ENCODE measurements at regions of chr2 and their contacts with region 1.

Region 1: GRCh38 chr2:9050122-9050809 is 46.8 kb upstream of the MBOAT2 start:
- DNase-seq: no peak
- H3K4me3 ChIP-seq: no peak overlapping the region
- H3K27ac ChIP-seq: no peak overlapping the region
- H3K4me1 ChIP-seq: peaks cover 0 to 5% (median 0%) of the 10 kb centered on the region in 4 donors
- H3K27me3 ChIP-seq: no peaks in the 10 kb centered on the region
- CTCF ChIP-seq: no peak
- EP300 ChIP-seq: no peak
- POLR2A ChIP-seq: no peak

Region 2: DNA sequence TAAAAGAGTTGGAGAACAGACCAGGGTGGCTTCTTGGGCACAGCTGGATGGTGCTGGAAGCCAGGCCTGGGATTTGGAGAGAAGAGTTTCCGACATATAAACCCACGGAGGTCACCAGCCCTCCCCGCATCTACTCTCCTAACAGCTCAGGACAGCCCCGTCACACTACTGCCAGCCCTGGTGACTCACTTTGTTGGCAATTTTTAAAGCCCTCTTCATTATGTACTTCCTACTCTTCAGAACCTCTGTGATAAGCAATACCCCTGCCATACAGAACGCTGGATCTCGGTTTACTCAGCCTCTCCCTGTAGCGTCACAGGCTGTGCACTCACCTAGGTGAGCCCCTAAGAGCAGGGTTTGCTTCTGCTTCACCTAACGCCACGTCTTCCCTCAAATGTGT is 320.3 kb before region 1 on chr2:
- in situ Hi-C with region 1: no loop called
- intact Hi-C with region 1: no loop called
- DNase-seq: no peak
- H3K4me3 ChIP-seq: no peak overlapping the region
- H3K27ac ChIP-seq: no peak overlapping the region
- H3K4me1 ChIP-seq: no peaks in the 10 kb centered on the region
- H3K27me3 ChIP-seq: no peaks in the 10 kb centered on the region
- CTCF ChIP-seq: no peak
- EP300 ChIP-seq: no peak
- POLR2A ChIP-seq: no peak

Region 3: GRCh38 chr2:9015998-9016397 is 34.3 kb before region 1 on chr2:
- in situ Hi-C with region 1: no loop called
- intact Hi-C with region 1: loop called (anchors 1 kb)
- DNase-seq: no peak
- H3K4me3 ChIP-seq: no peak overlapping the region
- H3K27ac ChIP-seq: no peak overlapping the region
- H3K4me1 ChIP-seq: no peaks in the 10 kb centered on the region
- H3K27me3 ChIP-seq: no peaks in the 10 kb centered on the region
- CTCF ChIP-seq: no peak
- EP300 ChIP-seq: no peak
- POLR2A ChIP-seq: no peak

Measured in transverse colon (tissue), 4 donors.